Brain microvascular endothelial cell (primary cell): ENCODE measurements at regions of chr3 and their contacts with region 1.

Region 1: DNA sequence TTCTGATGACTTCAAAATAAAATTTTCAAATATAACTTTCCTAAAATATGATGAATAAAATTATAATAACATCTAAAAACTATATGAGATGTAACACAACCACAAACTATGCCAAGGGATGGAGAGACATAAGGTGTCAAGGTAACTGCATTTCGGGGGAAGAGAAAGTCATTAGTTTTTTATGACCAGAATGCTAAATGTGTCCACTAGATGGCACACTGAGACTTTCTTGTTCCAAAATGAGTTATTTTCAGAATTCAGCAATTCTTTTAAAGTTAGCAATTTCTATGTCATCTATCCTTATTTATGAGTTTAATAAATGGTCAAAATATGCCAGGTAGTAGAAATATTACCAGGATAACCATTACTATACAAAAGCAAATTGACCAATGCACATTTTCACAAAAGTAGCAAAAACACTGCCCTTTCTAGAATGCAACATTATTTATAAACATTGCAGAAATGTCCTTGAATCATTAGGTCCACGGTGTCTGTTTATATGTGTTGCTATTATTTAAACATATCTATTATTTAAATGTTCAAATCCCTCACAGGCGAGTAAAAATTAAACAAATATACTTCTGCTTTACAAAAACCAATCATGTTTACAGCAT is 374.2 kb downstream of the PLCL2 start:
- DNase-seq: no peak
- H3K4me3 ChIP-seq: no peak overlapping the region
- H3K27ac ChIP-seq: no peak overlapping the region
- H3K27me3 ChIP-seq: no peaks in the 10 kb centered on the region
- CTCF ChIP-seq: peak; percentile 60

Region 2: DNA sequence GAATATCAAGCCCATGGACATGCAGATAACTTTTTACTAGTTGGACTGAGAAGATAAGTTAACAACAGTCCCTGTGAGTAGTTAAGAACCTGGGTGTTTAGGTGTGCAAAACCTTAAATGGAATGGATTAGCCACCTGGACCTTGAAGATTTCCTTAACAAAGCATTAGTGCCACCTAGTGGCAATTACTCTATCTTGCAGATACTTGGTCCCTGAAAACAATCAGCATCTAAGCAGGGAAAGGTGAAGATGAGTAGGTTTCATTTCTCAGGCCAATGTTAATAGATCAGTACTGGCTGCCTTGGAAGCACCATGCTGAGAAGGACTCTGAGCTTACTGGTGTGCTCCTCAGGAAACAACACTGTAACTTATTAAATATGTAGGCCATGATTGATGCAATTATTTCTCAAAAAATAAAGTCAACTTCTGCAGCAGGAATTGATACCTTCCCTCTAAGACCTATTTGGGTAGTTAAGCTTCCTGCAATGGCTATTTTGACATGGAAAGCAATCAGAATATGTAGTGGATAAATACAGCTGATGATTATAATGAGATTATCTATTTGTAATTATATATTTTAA is 154.1 kb after region 1 on chr3:
- in situ Hi-C with region 1: loop called (anchors 25 kb)
- DNase-seq: peak; percentile 52
- H3K4me3 ChIP-seq: no peak overlapping the region
- H3K27ac ChIP-seq: no peak overlapping the region
- H3K27me3 ChIP-seq: no peaks in the 10 kb centered on the region
- CTCF ChIP-seq: peak; percentile 72